ENCODE measurements at regions of chr10 and their contacts with region 1.

Region 1: DNA sequence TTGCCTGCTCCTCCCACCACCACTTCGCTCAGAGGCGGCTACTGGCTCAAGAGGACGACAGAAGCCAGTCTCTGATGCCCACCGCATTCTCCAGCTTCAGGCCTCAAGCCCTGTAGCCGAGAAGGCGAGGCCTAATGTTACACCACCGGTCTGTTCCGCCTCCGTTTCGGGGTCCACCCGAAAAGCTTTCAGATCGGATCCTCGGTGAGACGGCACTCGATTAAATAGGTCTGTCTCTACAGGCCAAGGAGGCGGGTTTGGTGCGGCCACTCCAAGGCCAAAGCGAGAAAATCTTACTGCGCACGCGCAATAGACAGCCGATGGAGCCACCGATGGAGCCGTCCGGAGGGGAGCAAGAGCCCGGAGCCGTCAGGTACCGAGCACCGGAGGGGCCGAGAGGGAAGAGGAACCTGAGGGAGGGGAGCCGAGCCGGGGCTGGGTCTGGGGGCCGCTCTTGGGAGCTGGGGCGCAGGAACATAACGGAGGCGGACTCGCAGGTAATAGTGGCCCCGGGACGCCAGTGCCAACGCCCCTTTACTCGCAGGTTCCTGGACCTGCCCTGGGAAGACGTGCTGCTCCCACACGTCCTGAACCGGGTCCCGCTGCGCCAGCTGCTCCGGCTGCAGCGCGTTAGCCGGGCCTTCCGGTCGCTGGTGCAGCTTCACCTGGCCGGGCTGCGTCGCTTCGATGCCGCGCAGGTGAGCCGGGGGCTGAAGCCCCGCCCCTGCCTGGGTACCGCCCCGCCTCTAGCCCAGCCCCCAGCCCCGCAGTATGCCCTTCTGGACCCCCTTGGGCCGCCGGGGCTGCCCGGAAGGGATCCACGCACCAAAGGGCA is at the start of gene FBXL15:
- DNase-seq: peak; percentile 98
- ATAC-seq: peak; percentile 87
- H3K4me3 Mint-ChIP-seq: peak within 1 kb of the TSS; percentile 97
- H3K27ac Mint-ChIP-seq: peak within 1 kb of the TSS; percentile 95
- H3K4me1 Mint-ChIP-seq: peaks cover 40% of the 10 kb centered on the region
- H3K27me3 Mint-ChIP-seq: peaks cover 19% of the 10 kb centered on the region
- total RNA-seq, gene FBXL15: 13.5 to 15.2 TPM

Region 2: DNA sequence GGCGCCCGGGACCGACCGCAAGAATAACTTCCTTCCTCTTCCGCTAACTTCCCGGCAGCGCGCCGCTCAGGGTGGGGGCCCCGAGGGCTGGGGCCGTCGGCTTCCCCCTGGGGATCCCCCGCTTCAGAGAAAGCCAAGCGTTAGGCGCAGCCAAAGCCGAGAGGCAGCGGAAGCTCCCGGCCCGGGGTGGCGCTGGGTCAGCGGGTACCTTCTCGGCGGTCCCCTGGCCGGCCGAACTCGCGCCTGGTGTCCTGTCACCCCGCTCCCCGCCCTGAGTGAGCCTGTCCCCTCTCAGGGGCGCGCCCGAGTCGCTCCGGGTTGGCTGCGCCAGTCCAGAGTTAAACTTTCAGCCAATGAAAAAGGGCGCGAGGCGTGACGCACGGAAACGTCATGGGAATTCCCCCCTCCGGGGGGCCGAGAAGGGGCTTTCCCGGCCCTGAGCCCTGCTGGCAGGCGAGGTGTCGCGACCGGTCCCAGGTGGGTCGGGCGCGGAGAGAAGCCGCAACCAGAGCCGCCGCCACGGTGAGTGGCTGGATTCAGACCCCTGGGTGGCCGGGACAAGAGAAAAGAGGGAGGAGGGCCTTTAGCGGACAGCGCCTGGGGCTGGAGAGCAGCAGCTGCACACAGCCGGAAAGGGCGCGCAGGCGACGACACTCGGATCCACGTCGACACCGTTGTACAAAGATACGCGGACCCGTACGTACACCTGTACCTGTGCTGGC is 26.8 kb before region 1 on chr10:
- CTCF ChIA-PET with region 1: interaction called, 32 read pairs
- DNase-seq: peak; percentile 99
- ATAC-seq: peak; percentile 88
- H3K4me3 Mint-ChIP-seq: peak overlapping the region; percentile 84
- H3K27ac Mint-ChIP-seq: peak overlapping the region; percentile 90
- H3K4me1 Mint-ChIP-seq: peaks cover 38% of the 10 kb centered on the region
- H3K27me3 Mint-ChIP-seq: no peaks in the 10 kb centered on the region

Region 3: GRCh38 chr10:102399217-102400089 is 21.6 kb before region 1 on chr10:
- CTCF ChIA-PET with region 1: interaction called, 32 read pairs
- DNase-seq: peak; percentile 92
- ATAC-seq: peak; percentile 66
- H3K4me3 Mint-ChIP-seq: peak overlapping the region; percentile 52
- H3K27ac Mint-ChIP-seq: peak overlapping the region; percentile 59
- H3K4me1 Mint-ChIP-seq: peaks cover 36% of the 10 kb centered on the region
- H3K27me3 Mint-ChIP-seq: no peaks in the 10 kb centered on the region

Region 4: GRCh38 chr10:102432162-102432950 is 11.3 kb after region 1 on chr10 and contains the start of gene CUEDC2:
- CTCF ChIA-PET with region 1: interaction called, 82 read pairs
- DNase-seq: peak; percentile 99
- ATAC-seq: peak; percentile 95
- H3K4me3 Mint-ChIP-seq: peak within 1 kb of the TSS; percentile 91
- H3K27ac Mint-ChIP-seq: peak within 1 kb of the TSS; percentile 95
- H3K4me1 Mint-ChIP-seq: peaks cover 53% of the 10 kb centered on the region
- H3K27me3 Mint-ChIP-seq: no peaks in the 10 kb centered on the region
- total RNA-seq, gene CUEDC2: 73.5 to 78.2 TPM

Region 5: DNA sequence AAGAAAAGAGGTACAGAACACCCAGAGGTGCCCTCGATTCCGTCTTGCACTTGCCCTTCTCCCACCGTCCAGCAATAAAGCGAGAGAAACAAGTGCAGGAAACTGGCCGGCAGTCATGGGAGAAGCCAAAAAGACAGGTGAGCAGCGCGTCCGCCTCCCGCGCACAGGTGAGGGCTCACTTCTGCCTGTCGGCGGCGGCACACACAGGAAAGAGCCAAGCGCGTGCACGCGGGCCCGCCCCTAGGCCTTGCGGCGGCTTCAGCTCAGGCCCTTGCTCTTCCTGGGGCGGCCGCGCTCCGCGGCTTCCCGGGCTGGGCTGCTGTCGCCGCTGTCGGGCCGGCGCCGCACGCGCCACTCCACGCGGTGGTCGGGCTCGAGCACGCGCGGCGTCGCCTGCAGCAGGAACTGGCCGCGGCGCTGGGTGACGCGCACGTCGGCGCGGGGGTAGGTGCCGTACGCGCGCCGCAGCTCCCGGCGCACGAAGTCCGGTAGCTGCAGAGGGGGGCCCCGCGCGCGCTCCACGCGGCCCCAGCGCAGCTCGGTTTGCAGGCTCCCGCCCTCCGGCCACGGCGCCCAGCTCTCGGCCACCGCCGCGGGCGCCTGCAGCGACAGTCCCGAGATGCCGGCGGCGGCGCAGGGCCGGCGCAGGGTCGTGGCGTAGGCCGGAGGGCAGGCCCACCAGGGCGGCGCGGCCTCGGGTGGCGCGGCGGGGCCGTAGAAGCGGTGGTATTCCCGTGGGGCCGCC is 29.3 kb after region 1 on chr10:
- CTCF ChIA-PET with region 1: interaction called, 11 read pairs
- DNase-seq: peak; percentile 92
- ATAC-seq: peak; percentile 79
- H3K4me3 Mint-ChIP-seq: peak overlapping the region; percentile 86
- H3K27ac Mint-ChIP-seq: peak overlapping the region; percentile 91
- H3K4me1 Mint-ChIP-seq: peaks cover 42% of the 10 kb centered on the region
- H3K27me3 Mint-ChIP-seq: no peaks in the 10 kb centered on the region

Region 6: GRCh38 chr10:103168486-103169311 is 747.7 kb after region 1 on chr10:
- CTCF ChIA-PET with region 1: no interaction called
- DNase-seq: no peak
- ATAC-seq: no peak
- H3K4me3 Mint-ChIP-seq: no peak overlapping the region
- H3K27ac Mint-ChIP-seq: no peak overlapping the region
- H3K4me1 Mint-ChIP-seq: peaks cover 8% of the 10 kb centered on the region
- H3K27me3 Mint-ChIP-seq: no peaks in the 10 kb centered on the region

Measured in activated CD8-positive, alpha-beta memory T cell treated with anti-CD3 and anti-CD28 coated beads, Interleukin-2, amount 10 ng/mL, durations not matched to agents 7 days and 5 days (primary cell).